Endothelial cell of umbilical vein (primary cell): ENCODE measurements at regions of chr12 and their contacts with region 1.

Region 1: DNA sequence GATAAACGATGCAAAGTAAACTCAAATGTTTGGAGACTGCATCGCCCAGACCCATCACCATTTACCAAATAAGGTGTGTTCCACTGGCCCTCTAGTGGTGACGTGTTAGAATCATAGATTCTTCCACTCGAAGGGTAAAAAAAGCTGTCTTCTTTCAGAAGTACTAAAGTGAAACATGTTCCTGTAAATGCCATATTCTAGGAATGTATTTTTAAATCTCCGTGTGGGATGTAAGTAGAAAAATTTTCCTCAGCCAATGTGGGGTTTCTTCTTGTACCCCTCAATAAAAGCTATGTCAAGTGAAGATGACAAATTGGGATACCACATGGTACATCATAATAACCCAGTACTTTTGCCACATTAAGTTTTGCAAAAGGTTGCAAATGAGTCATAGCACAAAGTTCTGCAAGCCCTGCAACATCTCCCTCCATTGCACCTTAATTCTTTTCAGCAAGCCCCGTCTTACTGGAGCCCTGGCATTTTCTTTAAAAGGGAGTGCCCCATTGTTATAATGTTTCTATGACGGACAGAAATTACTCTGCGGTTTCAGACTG is 100.8 kb downstream of the CCER1 start:
- DNase-seq: peak; percentile 60
- H3K4me3 ChIP-seq: no peak overlapping the region
- H3K27ac ChIP-seq: no peak overlapping the region
- H3K4me1 ChIP-seq: no peaks in the 10 kb centered on the region
- H3K27me3 ChIP-seq: no peaks in the 10 kb centered on the region
- CTCF ChIP-seq: peak; percentile 59 to 63
- POLR2A ChIP-seq: no peak

Region 2: DNA sequence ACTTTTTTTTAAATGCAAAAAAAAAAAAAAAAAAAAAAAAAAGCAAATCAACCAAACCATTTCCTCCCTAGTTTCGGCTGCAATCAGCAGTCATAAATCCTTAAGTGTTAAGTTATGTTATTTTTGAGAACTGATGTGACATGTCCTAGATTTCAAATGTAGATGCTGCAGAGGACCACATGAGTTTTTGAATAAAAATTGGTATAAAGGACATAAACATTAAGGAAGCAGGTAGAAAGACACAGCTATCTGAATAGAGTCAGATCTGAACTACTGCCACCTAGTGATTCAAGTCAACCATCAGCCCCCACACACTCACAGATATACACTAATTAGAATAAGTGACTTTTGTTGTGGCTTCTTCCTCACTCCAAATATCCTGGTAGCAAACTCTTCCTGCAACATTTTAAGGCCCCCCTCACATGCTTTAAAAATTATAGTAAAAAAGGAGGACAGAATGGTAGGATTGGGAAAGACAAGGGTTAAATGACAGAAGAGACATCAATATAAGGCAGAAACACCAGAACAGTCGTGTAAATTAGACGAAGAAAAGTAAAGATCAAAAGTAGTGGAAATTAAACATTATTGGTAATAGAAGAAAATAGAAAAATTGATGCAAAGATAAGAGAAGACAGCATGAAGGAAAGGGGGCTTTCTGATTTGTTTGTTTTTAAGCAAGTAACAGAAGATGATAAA is 751.1 kb before region 1 on chr12:
- CTCF ChIA-PET with region 1: interaction called, 5 read pairs
- POLR2A ChIA-PET with region 1: no interaction called
- dilution Hi-C with region 1: no loop called
- intact Hi-C with region 1: loop called (anchors 5 kb)
- DNase-seq: peak; percentile 63
- H3K4me3 ChIP-seq: no peak overlapping the region
- H3K27ac ChIP-seq: no peak overlapping the region
- H3K4me1 ChIP-seq: no peaks in the 10 kb centered on the region
- H3K27me3 ChIP-seq: no peaks in the 10 kb centered on the region
- CTCF ChIP-seq: peak; percentile 34 to 54
- POLR2A ChIP-seq: no peak

Region 3: GRCh38 chr12:90333939-90334338 is 520.3 kb before region 1 on chr12:
- CTCF ChIA-PET with region 1: interaction called, 3 read pairs
- POLR2A ChIA-PET with region 1: no interaction called
- dilution Hi-C with region 1: no loop called
- intact Hi-C with region 1: loop called (anchors 10 kb)
- DNase-seq: peak; percentile 53
- H3K4me3 ChIP-seq: no peak overlapping the region
- H3K27ac ChIP-seq: no peak overlapping the region
- H3K4me1 ChIP-seq: peaks cover 40% of the 10 kb centered on the region
- H3K27me3 ChIP-seq: no peaks in the 10 kb centered on the region
- CTCF ChIP-seq: no peak
- POLR2A ChIP-seq: no peak

Region 4: GRCh38 chr12:90695415-90695814 is 158.8 kb before region 1 on chr12:
- CTCF ChIA-PET with region 1: interaction called, 17 read pairs
- POLR2A ChIA-PET with region 1: no interaction called
- dilution Hi-C with region 1: no loop called
- intact Hi-C with region 1: loop called (anchors 5 kb)
- DNase-seq: peak; percentile 27
- H3K4me3 ChIP-seq: no peak overlapping the region
- H3K27ac ChIP-seq: no peak overlapping the region
- H3K4me1 ChIP-seq: peaks cover 13% of the 10 kb centered on the region
- H3K27me3 ChIP-seq: no peaks in the 10 kb centered on the region
- CTCF ChIP-seq: peak in 1 of 2 donors; percentile 3
- POLR2A ChIP-seq: no peak

Region 5: GRCh38 chr12:90870971-90871725 is 16.9 kb after region 1 on chr12:
- CTCF ChIA-PET with region 1: interaction called, 17 read pairs
- POLR2A ChIA-PET with region 1: no interaction called
- dilution Hi-C with region 1: no loop called
- intact Hi-C with region 1: no loop called
- DNase-seq: no peak
- H3K4me3 ChIP-seq: no peak overlapping the region
- H3K27ac ChIP-seq: no peak overlapping the region
- H3K4me1 ChIP-seq: no peaks in the 10 kb centered on the region
- H3K27me3 ChIP-seq: no peaks in the 10 kb centered on the region
- CTCF ChIP-seq: no peak
- POLR2A ChIP-seq: no peak

Region 6: GRCh38 chr12:91142221-91142631 is 288.0 kb after region 1 on chr12:
- CTCF ChIA-PET with region 1: no interaction called
- POLR2A ChIA-PET with region 1: no interaction called
- dilution Hi-C with region 1: no loop called
- intact Hi-C with region 1: no loop called
- DNase-seq: no peak
- H3K4me3 ChIP-seq: no peak overlapping the region
- H3K27ac ChIP-seq: no peak overlapping the region
- H3K4me1 ChIP-seq: peaks cover 21% of the 10 kb centered on the region
- H3K27me3 ChIP-seq: no peaks in the 10 kb centered on the region
- CTCF ChIP-seq: no peak
- POLR2A ChIP-seq: no peak

Region 7: GRCh38 chr12:91289906-91290305 is 435.7 kb after region 1 on chr12:
- CTCF ChIA-PET with region 1: no interaction called
- POLR2A ChIA-PET with region 1: no interaction called
- dilution Hi-C with region 1: no loop called
- intact Hi-C with region 1: no loop called
- DNase-seq: peak; percentile 36
- H3K4me3 ChIP-seq: no peak overlapping the region
- H3K27ac ChIP-seq: no peak overlapping the region
- H3K4me1 ChIP-seq: no peaks in the 10 kb centered on the region
- H3K27me3 ChIP-seq: no peaks in the 10 kb centered on the region
- CTCF ChIP-seq: no peak
- POLR2A ChIP-seq: no peak

Region 8: GRCh38 chr12:91651728-91652127 is 797.5 kb after region 1 on chr12:
- CTCF ChIA-PET with region 1: no interaction called
- POLR2A ChIA-PET with region 1: no interaction called
- dilution Hi-C with region 1: no loop called
- intact Hi-C with region 1: no loop called
- DNase-seq: no peak
- H3K4me3 ChIP-seq: no peak overlapping the region
- H3K27ac ChIP-seq: no peak overlapping the region
- H3K4me1 ChIP-seq: no peaks in the 10 kb centered on the region
- H3K27me3 ChIP-seq: no peaks in the 10 kb centered on the region
- CTCF ChIP-seq: no peak
- POLR2A ChIP-seq: no peak